GM18951 (cell line): ENCODE measurements at regions of chr2 and their contacts with region 1.

Region 1: DNA sequence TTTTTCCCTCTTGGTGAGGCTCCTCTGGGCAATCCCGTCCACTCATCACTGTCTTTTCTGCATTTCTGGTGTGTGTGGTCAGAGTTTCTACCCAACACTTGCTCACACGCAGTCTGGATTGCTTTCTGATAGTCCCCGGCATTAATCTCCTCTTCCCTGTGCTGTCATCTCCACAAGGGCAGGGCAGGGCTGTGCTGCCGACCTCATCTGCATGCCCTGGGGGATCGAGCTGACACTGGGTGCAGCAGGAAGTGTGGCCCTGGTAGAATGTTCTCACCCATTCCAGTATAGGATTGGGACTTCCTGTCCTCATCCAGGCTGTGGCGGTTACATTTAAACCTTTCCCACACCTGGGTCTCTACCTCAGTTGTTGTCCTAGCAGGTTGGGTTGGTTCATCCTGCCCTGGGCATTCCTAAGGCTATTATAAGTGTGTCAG is 80.0 kb upstream of the FAM136A start:
- POLR2A ChIP-seq: no peak

Region 2: DNA sequence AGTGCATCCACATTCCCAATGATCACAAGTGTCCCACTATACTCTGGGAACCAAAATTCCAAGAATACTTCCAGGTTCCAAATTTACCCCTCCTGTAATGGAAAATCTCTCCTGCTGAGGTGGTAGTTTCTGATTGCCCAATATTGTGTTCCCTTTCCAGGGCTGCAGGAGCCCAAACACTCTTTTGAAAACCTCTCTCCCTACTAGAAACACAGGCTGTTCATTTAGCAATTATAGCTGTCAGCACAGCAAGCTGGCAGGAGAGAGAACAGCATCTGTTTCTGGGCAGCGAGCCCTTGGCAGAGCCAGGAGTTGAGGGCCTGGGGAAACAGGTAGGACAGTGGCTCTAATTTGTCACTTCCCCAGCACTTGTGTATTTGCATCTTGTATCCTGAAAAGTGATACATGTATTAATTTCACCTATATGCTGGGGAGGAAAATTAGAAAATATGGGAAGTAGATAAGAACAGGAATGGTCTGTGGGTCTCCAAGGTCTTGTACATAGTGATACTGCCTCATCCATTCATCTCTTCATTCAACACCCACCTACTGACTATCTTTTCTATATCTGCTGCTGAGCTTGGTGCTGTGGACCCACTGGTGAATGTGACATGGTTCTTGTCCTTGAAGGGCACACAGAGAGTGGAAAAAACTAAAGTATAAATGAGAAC is 861.9 kb after region 1 on chr2:
- in situ Hi-C with region 1: loop called (anchors 10 kb)
- POLR2A ChIP-seq: no peak